PC-9 (cell line): ENCODE measurements at regions of chr17 and their contacts with region 1.

Region 1: DNA sequence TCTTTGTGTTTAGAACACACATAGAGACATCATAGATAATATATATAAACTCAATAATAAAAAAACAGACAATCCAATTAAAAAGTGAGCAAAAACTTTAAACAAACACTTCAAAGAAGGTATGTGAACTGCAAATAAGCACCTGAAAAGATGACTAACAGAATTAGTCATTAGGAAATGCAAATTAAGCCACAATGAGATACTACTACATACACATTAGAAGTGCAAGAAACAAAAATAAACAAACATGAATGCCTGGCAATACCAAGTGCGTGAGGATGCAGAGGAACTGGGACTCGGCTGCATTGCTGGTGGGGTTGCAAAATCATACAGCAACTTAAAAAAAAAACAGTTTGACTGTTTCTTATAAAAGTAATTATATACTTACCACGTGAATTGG is 799.0 kb downstream of the KCNJ2 start:
- DNase-seq: no peak
- H3K4me3 ChIP-seq: no peak overlapping the region
- H3K27ac ChIP-seq: no peak overlapping the region
- H3K4me1 ChIP-seq: no peaks in the 10 kb centered on the region
- H3K27me3 ChIP-seq: no peaks in the 10 kb centered on the region
- CTCF ChIP-seq: no peak

Region 2: DNA sequence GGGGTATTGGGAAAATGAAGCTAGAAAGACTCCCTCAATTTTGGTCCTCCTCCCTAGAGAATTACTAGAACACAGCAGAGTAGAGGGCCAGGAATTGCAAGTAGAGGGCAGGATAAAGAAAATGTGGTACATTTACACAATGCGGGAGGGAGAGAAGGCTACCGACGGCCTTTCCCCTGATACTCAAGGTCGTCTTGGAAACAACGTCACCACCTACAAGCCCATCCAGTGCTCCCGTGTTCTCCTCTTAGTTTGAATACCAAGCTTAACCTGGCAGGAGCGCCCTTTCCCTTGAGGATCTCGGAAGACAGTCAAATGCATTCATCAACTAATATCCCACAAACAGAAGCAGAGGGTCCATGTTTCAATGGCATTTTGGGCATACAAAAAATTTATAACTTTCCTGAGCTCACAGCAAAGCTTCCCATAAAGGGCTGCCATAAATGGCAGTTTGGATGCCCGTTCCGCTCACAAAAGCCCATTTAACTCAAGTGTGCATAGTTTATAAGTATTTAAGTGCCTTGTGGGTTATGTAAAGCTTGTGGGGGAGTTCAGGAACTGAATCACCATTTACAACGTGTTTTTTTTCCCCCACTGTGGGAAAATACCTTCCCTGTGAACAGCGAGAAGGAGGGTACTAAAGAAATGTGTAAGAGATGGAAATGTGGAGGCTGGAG is 1709.5 kb after region 1 on chr17:
- CTCF ChIA-PET with region 1: no interaction called
- POLR2A ChIA-PET with region 1: interaction called, 11 read pairs
- intact Hi-C with region 1: no loop called
- DNase-seq: no peak
- H3K4me3 ChIP-seq: no peak overlapping the region
- H3K27ac ChIP-seq: no peak overlapping the region
- H3K4me1 ChIP-seq: peaks cover 24% of the 10 kb centered on the region
- H3K27me3 ChIP-seq: no peaks in the 10 kb centered on the region
- CTCF ChIP-seq: no peak